SK-N-SH (cell line): ENCODE measurements at regions of chrX and their contacts with region 1.

Region 1: DNA sequence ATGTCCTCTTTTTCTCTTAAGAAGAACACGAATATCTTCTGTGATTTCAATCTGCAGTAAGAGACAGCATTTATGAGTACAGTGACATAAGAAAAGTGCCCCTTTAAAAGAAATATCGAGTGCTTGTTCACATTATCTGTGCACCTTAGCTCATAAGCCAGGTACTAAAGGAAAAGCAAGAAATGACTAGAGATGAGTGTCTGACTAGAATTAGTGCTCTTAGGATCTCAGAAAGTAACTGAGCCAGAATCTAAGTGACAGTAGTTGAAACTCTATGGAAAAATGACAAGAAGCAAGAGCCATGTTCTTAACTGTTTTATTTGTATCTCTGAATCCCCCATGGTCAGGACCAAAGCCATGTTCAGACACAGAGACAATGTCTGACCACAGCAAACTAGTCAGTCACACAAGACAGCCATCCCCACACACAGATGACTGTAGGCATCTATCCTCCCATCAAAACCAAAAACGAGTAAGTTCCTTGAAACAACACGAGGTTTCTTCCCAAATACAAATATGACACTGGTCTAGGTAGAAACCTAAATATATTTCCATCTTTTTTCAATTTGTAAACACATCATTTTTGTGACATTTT is 36.8 kb downstream of the ACSL4 start:
- DNase-seq: no peak
- H3K4me3 ChIP-seq: no peak overlapping the region
- H3K27ac ChIP-seq: no peak overlapping the region
- H3K4me1 ChIP-seq: 0 out of 4 replicates have a peak, but pooled peaks cover 0 to 12% of the 10 kb centered on the region in 2 experiments
- H3K27me3 ChIP-seq: no peaks in the 10 kb centered on the region; the same call in 1 of the 2 replicates
- CTCF ChIP-seq: no peak
- EP300 ChIP-seq: no peak
- RAD21 ChIP-seq: no peak

Region 2: DNA sequence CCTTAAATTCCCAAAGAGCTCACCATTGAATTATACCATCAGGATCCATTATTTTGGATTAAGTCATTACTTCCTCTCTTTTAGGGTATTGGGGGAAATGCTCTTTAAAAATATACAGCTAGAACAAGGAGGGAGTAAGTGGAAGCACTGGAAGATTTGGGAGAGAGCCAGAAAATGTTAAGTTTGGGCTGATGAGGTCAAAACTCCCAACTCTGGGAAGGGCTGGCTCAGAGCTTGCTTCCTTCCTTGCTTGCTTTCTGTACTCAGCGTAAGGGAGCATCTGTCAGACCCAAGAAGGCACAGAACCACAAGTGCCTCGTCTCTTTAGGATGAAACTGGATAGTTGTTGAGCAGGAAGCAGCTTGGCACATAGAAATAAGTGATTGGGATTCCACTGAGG is 352.6 kb before region 1 on chrX:
- CTCF ChIA-PET with region 1: no interaction called
- POLR2A ChIA-PET with region 1: no interaction called
- DNase-seq: no peak
- H3K4me3 ChIP-seq: no peak overlapping the region
- H3K27ac ChIP-seq: no peak overlapping the region
- H3K4me1 ChIP-seq: no peaks in the 10 kb centered on the region
- H3K27me3 ChIP-seq: no peaks in the 10 kb centered on the region; the same call in 1 of the 2 replicates
- CTCF ChIP-seq: no peak
- EP300 ChIP-seq: no peak
- RAD21 ChIP-seq: no peak

Region 3: GRCh38 chrX:109709129-109709631 is 12.9 kb after region 1 on chrX:
- CTCF ChIA-PET with region 1: interaction called, 14 read pairs
- POLR2A ChIA-PET with region 1: no interaction called
- DNase-seq: no peak
- H3K4me3 ChIP-seq: no peak overlapping the region
- H3K27ac ChIP-seq: peak overlapping the region in 1 of 2 experiments; percentile 22; a peak in 1 of 4 replicates
- H3K4me1 ChIP-seq: peaks cover 0 to 13% of the 10 kb centered on the region in 2 experiments; a peak in 1 of 4 replicates
- H3K27me3 ChIP-seq: peaks cover 4% of the 10 kb centered on the region; the same call in 1 of the 2 replicates
- CTCF ChIP-seq: no peak
- EP300 ChIP-seq: no peak
- RAD21 ChIP-seq: no peak